ENCODE measurements at regions of chr11 and their contacts with region 1.

Region 1: DNA sequence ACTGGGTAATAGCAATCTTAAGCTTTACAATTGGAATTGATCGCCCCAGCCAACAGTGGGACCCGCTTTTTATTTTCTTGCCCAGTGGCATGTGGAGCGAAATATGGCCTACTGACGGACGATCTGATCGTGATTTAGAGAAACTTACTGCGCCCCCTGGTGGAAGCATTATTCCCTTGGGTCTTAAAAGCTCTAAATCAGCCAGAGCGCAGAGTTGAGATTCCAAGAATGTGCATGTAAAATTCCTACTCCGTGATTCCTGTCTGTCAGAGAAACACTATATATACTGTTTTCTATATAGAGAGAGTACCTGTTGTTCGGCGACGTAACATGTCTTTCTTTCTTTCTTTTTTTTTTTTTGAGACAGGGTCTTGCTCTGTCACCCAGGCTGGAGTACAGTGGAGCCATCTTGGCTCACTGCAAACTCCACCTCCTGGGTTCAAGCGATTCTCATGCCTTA is 3.7 kb upstream of the DPF2 start:
- DNase-seq: peak; percentile 94
- H3K4me3 Mint-ChIP-seq: no peak overlapping the region
- H3K27ac Mint-ChIP-seq: peak overlapping the region; percentile 75
- H3K4me1 Mint-ChIP-seq: peaks cover 14% of the 10 kb centered on the region
- H3K27me3 Mint-ChIP-seq: no peaks in the 10 kb centered on the region
- CTCF ChIP-seq: peak; percentile 76

Region 2: GRCh38 chr11:64960719-64961118 is 369.3 kb before region 1 on chr11:
- CTCF ChIA-PET with region 1: no interaction called
- POLR2A ChIA-PET with region 1: no interaction called
- intact Hi-C with region 1: no loop called
- DNase-seq: no peak
- H3K4me3 Mint-ChIP-seq: no peak overlapping the region
- H3K27ac Mint-ChIP-seq: no peak overlapping the region
- H3K4me1 Mint-ChIP-seq: peaks cover 8% of the 10 kb centered on the region
- H3K27me3 Mint-ChIP-seq: no peaks in the 10 kb centered on the region
- CTCF ChIP-seq: no peak

Region 3: DNA sequence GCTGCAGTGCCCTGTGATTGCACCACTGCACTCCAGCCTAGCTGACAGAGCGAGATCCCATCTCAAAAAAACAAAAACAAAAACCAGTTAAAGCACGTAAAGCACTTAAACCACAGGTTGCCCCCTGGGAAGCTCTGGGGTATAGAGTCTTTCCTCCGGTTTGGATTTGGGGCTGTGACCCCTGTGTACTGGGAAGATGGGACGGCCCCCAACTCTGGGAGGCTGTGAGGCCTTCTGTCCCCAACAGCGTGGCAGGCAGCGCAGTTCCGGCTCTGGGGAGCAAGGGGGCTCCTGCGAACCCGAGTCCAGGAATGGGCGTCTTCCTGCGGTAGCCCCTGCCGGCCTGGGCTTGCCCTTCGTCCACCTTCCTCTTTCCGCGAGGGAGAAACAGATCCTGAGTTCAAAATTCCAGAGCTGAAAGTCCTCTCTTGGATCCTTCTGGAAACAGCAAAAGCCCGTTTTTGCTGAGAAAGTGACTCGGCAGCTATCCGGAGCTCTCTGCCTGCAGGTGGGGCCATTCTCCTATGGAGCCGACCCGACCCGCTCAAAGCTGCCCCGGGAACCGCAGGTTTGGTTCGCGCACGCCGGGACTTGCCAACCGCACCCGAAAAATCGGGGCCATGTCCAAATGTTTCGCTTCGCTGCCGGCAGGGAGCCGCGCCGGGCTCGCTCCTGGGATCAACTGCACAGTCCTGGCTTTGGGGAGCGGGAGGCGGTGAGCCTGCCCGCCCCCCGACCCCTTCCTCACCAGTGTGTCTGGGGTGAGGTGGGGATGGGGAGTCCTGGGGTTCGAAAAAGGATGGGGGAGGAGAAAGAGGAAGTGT is 104.5 kb before region 1 on chr11:
- CTCF ChIA-PET with region 1: interaction called, 7 read pairs
- POLR2A ChIA-PET with region 1: interaction called, 4 read pairs
- intact Hi-C with region 1: loop called (anchors 1 kb)
- DNase-seq: peak; percentile 72
- H3K4me3 Mint-ChIP-seq: peak overlapping the region; percentile 71
- H3K27ac Mint-ChIP-seq: peak overlapping the region; percentile 35
- H3K4me1 Mint-ChIP-seq: peaks cover 5% of the 10 kb centered on the region
- H3K27me3 Mint-ChIP-seq: no peaks in the 10 kb centered on the region
- CTCF ChIP-seq: peak; percentile 36

Region 4: DNA sequence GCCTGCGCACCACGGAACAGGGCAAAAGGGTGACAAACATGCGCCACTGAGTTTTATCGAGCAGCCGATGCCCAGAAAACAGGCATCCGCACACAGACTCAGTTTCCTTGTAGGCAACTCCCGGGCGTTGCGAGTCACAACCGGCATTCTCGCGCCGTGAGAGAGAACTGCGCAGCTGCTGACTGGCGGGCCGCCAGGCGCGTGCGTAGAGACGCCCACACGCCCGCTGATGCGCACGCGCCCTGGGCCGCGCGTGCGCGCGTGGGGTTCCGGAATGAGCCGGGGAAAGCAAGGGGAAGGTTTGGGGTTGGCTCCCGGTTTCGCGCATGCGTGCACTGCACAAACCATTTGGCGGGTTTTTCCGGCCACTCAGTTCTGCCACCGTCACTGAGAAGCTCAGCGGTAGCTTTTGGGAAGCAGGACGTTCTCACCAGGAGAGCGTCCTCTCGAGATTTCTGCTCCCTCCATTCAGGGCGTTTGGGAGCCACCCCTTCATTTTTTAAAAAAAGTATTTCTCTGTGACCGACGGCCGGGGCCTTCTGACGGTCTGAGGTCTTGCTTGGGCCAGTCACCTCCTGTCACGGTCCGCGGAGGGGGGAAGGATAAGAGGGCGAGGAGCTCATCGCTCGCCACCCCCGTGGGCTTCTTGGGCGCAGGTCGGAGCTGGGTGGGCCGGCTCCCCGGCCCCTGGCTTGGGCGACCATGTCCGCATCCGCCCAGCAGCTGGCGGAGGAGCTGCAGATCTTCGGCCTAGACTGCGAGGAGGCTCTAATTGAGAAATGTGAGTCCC is 68.2 kb before region 1 on chr11 and contains the start of gene POLA2:
- CTCF ChIA-PET with region 1: interaction called, 30 read pairs
- POLR2A ChIA-PET with region 1: interaction called, 17 read pairs
- intact Hi-C with region 1: no loop called
- DNase-seq: peak; percentile 96
- H3K4me3 Mint-ChIP-seq: peak within 1 kb of the TSS; percentile 81
- H3K27ac Mint-ChIP-seq: peak within 1 kb of the TSS; percentile 95
- H3K4me1 Mint-ChIP-seq: peaks cover 9% of the 10 kb centered on the region
- H3K27me3 Mint-ChIP-seq: no peaks in the 10 kb centered on the region
- CTCF ChIP-seq: no peak
- total RNA-seq, gene POLA2: 8.8 and 10.3 TPM in 2 replicates

Region 5: DNA sequence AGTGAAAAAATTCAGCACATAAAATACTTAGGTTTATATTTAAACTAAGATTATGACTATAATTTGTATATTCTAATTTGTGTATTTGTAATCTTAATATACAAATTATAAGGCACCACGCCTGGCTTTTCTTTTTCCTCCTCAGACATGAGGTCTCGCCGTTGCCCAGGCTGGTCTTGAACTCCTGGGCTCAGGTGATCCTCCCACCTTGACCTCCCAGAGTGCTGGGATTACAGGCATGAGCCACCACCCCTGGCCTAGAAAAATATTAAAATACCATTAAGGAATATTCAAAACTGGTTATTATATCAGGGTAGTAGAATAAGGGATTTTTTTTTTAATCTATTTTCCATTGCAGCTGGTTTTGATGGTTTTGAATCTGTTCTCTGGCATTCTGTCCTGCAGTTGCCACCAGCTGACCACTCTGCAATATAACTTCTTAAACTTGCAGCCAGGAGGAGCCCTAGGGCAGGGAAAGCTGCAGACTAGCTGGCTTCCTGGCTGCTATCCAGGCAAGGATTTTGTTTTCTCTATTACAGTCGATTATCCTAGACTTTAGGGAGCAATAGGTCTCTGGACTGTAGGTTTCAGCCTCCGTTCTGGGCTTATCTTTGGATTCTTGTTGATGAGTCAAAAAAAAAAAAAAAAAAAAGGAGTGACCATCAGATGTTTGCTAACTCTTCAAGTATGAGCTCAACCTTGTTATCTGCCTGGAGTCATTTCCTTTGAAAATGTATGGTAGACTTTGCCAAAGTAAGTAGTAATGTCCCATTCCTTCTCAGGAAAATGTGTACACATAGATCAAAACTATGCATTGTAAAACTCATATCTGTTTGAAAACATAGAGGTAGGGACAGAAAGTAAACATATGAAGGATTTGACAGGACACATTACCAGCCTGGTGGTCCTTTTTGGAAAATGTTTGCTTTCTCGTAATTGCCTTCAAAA is 55.0 kb before region 1 on chr11:
- CTCF ChIA-PET with region 1: interaction called, 219 read pairs
- POLR2A ChIA-PET with region 1: interaction called, 27 read pairs
- intact Hi-C with region 1: loop called (anchors 1 kb)
- DNase-seq: peak; percentile 88
- H3K4me3 Mint-ChIP-seq: no peak overlapping the region
- H3K27ac Mint-ChIP-seq: no peak overlapping the region
- H3K4me1 Mint-ChIP-seq: peaks cover 15% of the 10 kb centered on the region
- H3K27me3 Mint-ChIP-seq: no peaks in the 10 kb centered on the region
- CTCF ChIP-seq: peak; percentile 90

Region 6: GRCh38 chr11:65290448-65291165 is 39.4 kb before region 1 on chr11:
- CTCF ChIA-PET with region 1: interaction called, 13 read pairs
- POLR2A ChIA-PET with region 1: no interaction called
- intact Hi-C with region 1: no loop called
- DNase-seq: peak; percentile 95
- H3K4me3 Mint-ChIP-seq: no peak overlapping the region
- H3K27ac Mint-ChIP-seq: peak overlapping the region; percentile 72
- H3K4me1 Mint-ChIP-seq: peaks cover 20% of the 10 kb centered on the region
- H3K27me3 Mint-ChIP-seq: no peaks in the 10 kb centered on the region
- CTCF ChIP-seq: no peak

Region 7: DNA sequence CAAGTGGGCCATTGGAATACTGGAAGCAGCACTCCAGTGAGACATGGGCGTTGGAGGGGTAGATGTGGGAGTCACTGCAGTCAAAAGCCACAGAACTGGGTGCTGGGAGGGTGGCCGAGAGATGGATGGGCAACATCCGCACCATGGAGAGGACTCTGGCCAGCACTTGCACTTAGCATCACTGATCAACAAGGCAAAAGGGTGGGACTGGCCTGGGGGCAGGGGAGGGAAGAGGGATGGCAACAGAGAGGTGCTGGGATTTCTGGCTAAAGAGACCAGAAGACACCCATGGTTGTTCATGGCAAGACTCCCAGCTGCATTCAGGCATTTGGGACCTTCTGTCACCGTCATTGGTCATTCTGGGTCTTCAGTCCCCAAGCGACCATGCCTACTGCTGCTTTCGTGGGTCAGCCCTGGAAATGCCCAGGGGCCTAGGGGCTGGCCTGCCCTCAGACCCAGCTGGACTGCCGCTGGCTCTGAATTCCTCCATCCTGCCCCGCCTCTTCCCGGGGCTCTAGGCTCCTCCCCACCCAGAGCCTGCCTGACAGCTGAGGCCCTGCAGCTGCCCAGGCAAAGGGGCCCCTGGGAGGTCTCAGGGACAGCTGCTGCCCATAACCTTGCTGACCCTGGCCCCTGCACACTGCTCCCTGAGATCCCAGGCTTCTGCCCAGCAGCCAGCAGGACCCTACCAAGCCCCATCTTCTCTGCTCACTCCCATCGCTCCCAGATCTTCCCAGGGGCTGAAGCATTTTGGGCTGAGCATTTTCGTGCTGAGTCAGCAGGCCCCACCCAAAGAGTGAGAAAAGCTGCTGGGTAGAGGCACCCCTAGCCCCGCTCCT is 28.3 kb before region 1 on chr11:
- CTCF ChIA-PET with region 1: interaction called, 11 read pairs
- POLR2A ChIA-PET with region 1: no interaction called
- intact Hi-C with region 1: no loop called
- DNase-seq: no peak
- H3K4me3 Mint-ChIP-seq: no peak overlapping the region
- H3K27ac Mint-ChIP-seq: no peak overlapping the region
- H3K4me1 Mint-ChIP-seq: peaks cover 10% of the 10 kb centered on the region
- H3K27me3 Mint-ChIP-seq: no peaks in the 10 kb centered on the region
- CTCF ChIP-seq: no peak

Region 8: DNA sequence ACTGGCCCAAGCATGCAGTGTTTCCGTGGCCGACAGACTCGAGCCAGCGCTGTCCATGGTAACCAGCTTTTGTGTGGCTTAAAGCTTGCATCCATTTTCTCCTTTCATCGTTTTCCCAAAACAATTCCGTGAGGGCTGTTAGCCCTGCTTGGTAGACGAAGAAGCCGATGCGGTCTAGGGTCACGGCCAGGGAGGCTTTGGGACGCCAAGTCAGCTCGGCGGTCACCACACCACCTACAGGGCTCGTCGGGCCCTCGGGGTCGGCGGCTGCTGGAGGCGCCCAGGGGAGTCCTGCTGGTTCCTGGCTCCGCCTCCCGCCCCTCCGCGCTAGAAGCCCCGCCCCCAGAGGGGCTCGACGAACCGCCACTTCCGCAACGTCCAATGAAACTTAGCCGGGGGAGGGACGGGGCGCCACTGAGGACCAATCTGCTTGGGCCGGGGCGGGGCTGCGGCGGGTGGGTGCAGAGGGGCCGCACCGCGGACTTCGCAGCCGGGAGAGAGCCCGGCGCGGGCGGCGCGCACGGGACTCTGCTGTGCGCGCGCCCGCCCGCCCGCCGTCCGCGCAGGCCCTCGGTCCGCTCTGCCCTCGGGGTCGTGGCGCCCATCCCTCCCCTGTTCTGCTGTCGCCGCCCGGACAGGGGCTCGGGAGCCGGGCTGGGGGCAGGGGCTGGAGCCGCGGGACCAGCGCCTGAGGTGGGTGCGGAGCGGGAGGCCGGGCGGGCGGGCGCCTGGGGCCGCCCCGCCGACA is 24.5 kb after region 1 on chr11 and contains the start of gene TIGD3:
- CTCF ChIA-PET with region 1: interaction called, 11 read pairs
- POLR2A ChIA-PET with region 1: interaction called, 14 read pairs
- intact Hi-C with region 1: no loop called
- DNase-seq: peak; percentile 95
- H3K4me3 Mint-ChIP-seq: peak within 1 kb of the TSS; percentile 72
- H3K27ac Mint-ChIP-seq: no peak within 1 kb of the TSS
- H3K4me1 Mint-ChIP-seq: peaks cover 18% of the 10 kb centered on the region
- H3K27me3 Mint-ChIP-seq: no peaks in the 10 kb centered on the region
- CTCF ChIP-seq: no peak
- total RNA-seq, gene TIGD3: 0.14 TPM in 1 of 2 replicates, not detected in the other